BJ (cell line): ENCODE measurements at regions of chr4 and their contacts with region 1.

Region 1: GRCh38 chr4:85778632-85779131 is 303.7 kb downstream of the ARHGAP24 start:
- DNase-seq: no peak
- H3K4me3 ChIP-seq: peak overlapping the region; percentile 45
- H3K27me3 ChIP-seq: no peaks in the 10 kb centered on the region
- CTCF ChIP-seq: no peak

Region 2: GRCh38 chr4:85761803-85762528 is 16.7 kb before region 1 on chr4:
- CTCF ChIA-PET with region 1: interaction called, 13 read pairs
- POLR2A ChIA-PET with region 1: no interaction called
- DNase-seq: no peak
- H3K4me3 ChIP-seq: no peak overlapping the region
- H3K27me3 ChIP-seq: no peaks in the 10 kb centered on the region
- CTCF ChIP-seq: no peak